HCT116 (cell line): ENCODE measurements at regions of chr6 and their contacts with region 1.

Region 1: GRCh38 chr6:161727083-161727833 is 453.4 kb upstream of the AGPAT4 start:
- DNase-seq: no peak
- ATAC-seq: no peak
- H3K4me3 ChIP-seq: no peak overlapping the region
- H3K27ac ChIP-seq: no peak overlapping the region
- H3K4me1 ChIP-seq: no peaks in the 10 kb centered on the region
- H3K27me3 ChIP-seq: peaks cover 15% of the 10 kb centered on the region; the same call in 1 of the 2 replicates
- CTCF ChIP-seq: no peak
- POLR2A ChIP-seq: no peak
- RAD21 ChIP-seq: no peak

Region 2: DNA sequence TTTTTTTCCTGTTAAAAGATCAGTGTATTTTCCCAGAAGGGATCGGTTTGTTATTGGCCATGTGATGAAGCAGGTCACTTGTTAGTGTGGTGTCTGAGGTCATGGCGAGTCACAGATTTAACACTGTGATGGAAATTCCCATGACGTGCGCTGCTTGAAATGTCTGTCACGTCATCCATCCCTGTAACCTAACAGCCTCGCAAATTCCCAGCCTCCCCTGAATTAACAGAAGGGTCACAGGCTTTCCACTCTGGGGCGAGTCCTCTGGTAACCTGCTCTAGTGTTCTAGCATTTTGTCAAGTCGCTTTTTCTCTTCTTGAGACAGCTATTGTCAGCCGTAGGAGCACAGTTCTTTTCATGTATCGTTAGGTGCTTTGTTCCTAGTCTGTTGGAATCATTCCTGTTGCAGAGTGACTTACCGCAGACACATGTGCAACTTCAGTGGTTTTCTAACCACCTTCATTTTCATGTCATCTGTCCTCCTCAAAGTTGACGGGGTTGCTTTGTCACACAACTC is 598.5 kb before region 1 on chr6:
- CTCF ChIA-PET with region 1: no interaction called
- POLR2A ChIA-PET with region 1: no interaction called
- RAD21 ChIA-PET with region 1: no interaction called
- intact Hi-C with region 1: loop called (anchors 10 kb)
- DNase-seq: peak; percentile 21
- ATAC-seq: no peak; the same call in 1 of the 2 replicates
- H3K4me3 ChIP-seq: no peak overlapping the region
- H3K27ac ChIP-seq: no peak overlapping the region
- H3K4me1 ChIP-seq: peaks cover 0 to 12% of the 10 kb centered on the region in 2 experiments; a peak in 2 of 4 replicates
- H3K27me3 ChIP-seq: no peaks in the 10 kb centered on the region
- CTCF ChIP-seq: no peak
- POLR2A ChIP-seq: no peak
- RAD21 ChIP-seq: no peak